H1 (cell line): ENCODE measurements at regions of chr1 and their contacts with region 1.

Region 1: DNA sequence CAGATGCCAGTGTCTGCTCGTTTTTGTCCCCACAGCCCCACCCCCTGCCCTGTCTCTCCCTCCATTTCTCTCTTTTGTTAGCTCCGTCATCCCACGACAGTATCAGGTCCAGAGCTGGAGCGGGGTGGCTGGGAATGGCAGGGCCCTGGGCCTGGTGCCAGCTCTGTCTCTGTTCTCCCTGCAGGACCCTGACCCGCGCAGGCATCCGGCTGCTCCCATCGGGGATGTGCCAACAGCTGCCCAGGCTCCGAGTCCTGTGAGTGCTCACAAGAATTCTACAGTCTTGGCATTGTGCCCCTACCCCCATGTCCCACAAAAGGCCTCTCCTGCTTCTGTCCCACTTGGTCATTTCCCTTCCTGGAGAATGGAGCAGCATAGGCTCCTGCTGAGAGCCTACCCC is 37.4 kb downstream of the UBE2T start:
- DNase-seq: no peak
- H3K4me3 ChIP-seq: no peak overlapping the region
- H3K27ac ChIP-seq: no peak overlapping the region
- H3K4me1 ChIP-seq: no peaks in the 10 kb centered on the region
- H3K27me3 ChIP-seq: no peaks in the 10 kb centered on the region; a peak in 1 of 7 replicates
- CTCF ChIP-seq: no peak
- EP300 ChIP-seq: no peak
- POLR2A ChIP-seq: no peak
- RAD21 ChIP-seq: no peak

Region 2: GRCh38 chr1:202207292-202207691 is 97.1 kb before region 1 on chr1:
- CTCF ChIA-PET with region 1: interaction called, 12 read pairs
- POLR2A ChIA-PET with region 1: no interaction called
- DNase-seq: no peak
- H3K4me3 ChIP-seq: no peak overlapping the region
- H3K27ac ChIP-seq: no peak overlapping the region
- H3K4me1 ChIP-seq: peaks cover 0 to 2% (median 0%) of the 10 kb centered on the region in 4 experiments; a peak in 1 of 7 replicates
- H3K27me3 ChIP-seq: peaks cover 0 to 2% (median 0%) of the 10 kb centered on the region in 4 experiments; a peak in 1 of 7 replicates
- CTCF ChIP-seq: peak; percentile 48 to 59 (median 51)
- EP300 ChIP-seq: no peak
- POLR2A ChIP-seq: no peak
- RAD21 ChIP-seq: peak; percentile 32 to 48; a peak in 3 of 4 replicates

Region 3: GRCh38 chr1:202235856-202236837 is 68.2 kb before region 1 on chr1:
- CTCF ChIA-PET with region 1: interaction called, 19 read pairs
- POLR2A ChIA-PET with region 1: no interaction called
- DNase-seq: peak; percentile 81 to 97
- H3K4me3 ChIP-seq: no peak overlapping the region
- H3K27ac ChIP-seq: no peak overlapping the region
- H3K4me1 ChIP-seq: peaks cover 0 to 18% (median 10%) of the 10 kb centered on the region in 4 experiments; a peak in 6 of 7 replicates
- H3K27me3 ChIP-seq: no peaks in the 10 kb centered on the region
- CTCF ChIP-seq: peak; percentile 81 to 97 (median 97)
- EP300 ChIP-seq: no peak; a peak in 1 of 3 replicates
- POLR2A ChIP-seq: no peak
- RAD21 ChIP-seq: peak; percentile 37 to 57; a peak in 3 of 4 replicates

Region 4: DNA sequence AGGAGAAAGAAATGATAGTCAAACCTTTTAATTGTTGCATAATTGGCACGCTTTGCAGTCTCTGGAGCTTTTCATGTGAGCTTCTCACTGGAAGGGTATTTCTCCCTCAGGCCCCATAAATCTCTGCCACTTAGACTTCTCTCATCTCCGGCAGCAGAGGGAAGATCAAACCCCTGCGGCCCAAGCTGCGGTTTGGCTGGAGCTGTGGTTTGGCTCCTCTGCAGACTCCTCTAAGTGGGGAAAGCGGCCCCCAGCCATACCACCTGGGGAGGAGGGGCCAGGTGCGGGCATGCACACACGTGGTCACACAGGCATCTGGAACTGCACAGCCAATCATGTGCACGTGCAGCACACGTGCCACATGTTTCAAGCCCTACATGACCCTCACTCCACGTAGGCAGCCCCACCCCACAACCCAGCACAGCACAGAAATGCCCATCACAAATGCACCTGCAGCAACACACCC is 21.0 kb before region 1 on chr1:
- CTCF ChIA-PET with region 1: interaction called, 27 read pairs
- POLR2A ChIA-PET with region 1: no interaction called
- DNase-seq: no peak
- H3K4me3 ChIP-seq: no peak overlapping the region
- H3K27ac ChIP-seq: no peak overlapping the region
- H3K4me1 ChIP-seq: peaks cover 1 to 11% (median 5%) of the 10 kb centered on the region in 4 experiments; a peak in 4 of 7 replicates
- H3K27me3 ChIP-seq: no peaks in the 10 kb centered on the region
- CTCF ChIP-seq: no peak
- EP300 ChIP-seq: no peak
- POLR2A ChIP-seq: no peak
- RAD21 ChIP-seq: no peak

Region 5: GRCh38 chr1:202291961-202292712 is 12.2 kb before region 1 on chr1:
- CTCF ChIA-PET with region 1: interaction called, 17 read pairs
- POLR2A ChIA-PET with region 1: no interaction called
- DNase-seq: no peak
- H3K4me3 ChIP-seq: no peak overlapping the region
- H3K27ac ChIP-seq: no peak overlapping the region
- H3K4me1 ChIP-seq: no peaks in the 10 kb centered on the region
- H3K27me3 ChIP-seq: no peaks in the 10 kb centered on the region
- CTCF ChIP-seq: no peak
- EP300 ChIP-seq: no peak
- POLR2A ChIP-seq: no peak
- RAD21 ChIP-seq: no peak

Region 6: DNA sequence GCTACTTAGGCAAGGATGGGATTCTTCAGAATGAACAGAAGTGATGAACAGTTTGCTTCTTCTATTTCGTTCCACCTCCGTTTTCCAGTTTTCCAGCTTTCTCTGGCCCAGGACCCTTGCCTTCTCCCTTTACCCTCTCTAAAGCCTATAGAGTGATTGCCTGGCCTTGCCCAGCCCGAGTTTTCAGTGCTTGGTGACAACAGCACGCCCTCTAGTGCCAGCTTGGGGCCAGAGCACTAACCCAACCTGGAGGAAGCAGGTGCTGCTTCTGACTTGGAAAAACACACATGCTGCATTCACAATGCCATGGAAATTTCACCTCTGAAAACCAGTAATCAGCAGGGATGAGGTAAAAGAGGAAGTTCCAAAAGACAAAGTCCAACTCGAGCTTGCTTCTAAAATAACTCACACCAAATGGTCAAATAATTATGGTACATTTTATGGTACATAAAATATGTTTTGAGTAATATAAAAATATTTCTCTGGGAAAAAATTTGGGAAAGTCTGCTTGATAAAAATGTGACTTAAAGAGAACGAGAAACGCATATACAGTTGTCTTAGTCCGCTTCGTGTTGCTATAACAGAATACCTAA is 11.3 kb after region 1 on chr1:
- CTCF ChIA-PET with region 1: interaction called, 67 read pairs
- POLR2A ChIA-PET with region 1: no interaction called
- DNase-seq: peak; percentile 49 to 90
- H3K4me3 ChIP-seq: no peak overlapping the region
- H3K27ac ChIP-seq: no peak overlapping the region
- H3K4me1 ChIP-seq: peaks cover 0 to 6% (median 1%) of the 10 kb centered on the region in 4 experiments; a peak in 3 of 7 replicates
- H3K27me3 ChIP-seq: no peaks in the 10 kb centered on the region; a peak in 1 of 7 replicates
- CTCF ChIP-seq: peak; percentile 98
- EP300 ChIP-seq: no peak
- POLR2A ChIP-seq: no peak
- RAD21 ChIP-seq: peak; percentile 97 to 98

Region 7: GRCh38 chr1:202376247-202376646 is 71.9 kb after region 1 on chr1:
- CTCF ChIA-PET with region 1: no interaction called
- POLR2A ChIA-PET with region 1: no interaction called
- DNase-seq: no peak
- H3K4me3 ChIP-seq: no peak overlapping the region
- H3K27ac ChIP-seq: no peak overlapping the region
- H3K4me1 ChIP-seq: peaks cover under 1 to 15% (median 4%) of the 10 kb centered on the region in 4 experiments; a peak in 5 of 7 replicates
- H3K27me3 ChIP-seq: no peaks in the 10 kb centered on the region
- CTCF ChIP-seq: no peak
- EP300 ChIP-seq: no peak
- POLR2A ChIP-seq: no peak
- RAD21 ChIP-seq: no peak